ENCODE measurements at regions of chr2 and their contacts with region 1.

Region 1: GRCh38 chr2:42095923-42096408 is 48.1 kb downstream of the PKDCC start:
- DNase-seq: no peak
- H3K4me3 ChIP-seq: no peak overlapping the region
- CTCF ChIP-seq: peak; percentile 63

Region 2: DNA sequence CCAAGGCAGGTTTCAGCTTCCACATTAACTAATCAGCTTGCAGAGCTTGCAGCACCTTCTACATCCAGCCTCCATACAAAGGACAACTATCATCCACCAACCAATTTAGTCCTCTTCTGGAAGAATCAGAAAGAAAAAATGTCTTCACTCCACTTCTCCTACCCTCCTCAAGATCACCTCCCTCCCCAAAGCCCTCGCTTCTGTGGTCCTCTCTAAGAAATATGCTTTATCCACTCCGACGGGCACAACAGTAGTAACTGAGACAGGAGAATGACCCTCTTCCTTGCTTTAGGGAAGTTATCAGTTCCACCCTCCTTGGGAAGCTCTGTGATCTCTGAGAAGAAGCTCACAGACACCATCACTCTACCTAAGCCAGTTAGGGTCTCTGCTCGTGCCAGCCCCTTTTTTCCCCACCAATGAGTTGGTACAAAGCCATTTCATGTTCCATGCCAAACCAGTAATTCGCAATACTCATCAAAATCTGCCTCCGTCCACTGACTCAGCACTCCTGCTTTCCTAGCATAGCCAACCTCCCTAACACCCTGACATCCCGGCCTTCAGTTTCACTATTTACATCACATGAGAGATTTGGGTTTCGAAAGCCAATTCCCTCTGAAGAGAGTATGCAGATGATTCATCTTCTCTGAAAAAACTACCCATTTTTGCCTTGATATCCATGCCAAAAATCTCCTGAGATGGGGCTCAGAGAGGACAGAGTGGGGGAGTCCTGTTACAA is 162.2 kb before region 1 on chr2:
- CTCF ChIA-PET with region 1: no interaction called
- POLR2A ChIA-PET with region 1: no interaction called
- DNase-seq: peak; percentile 74
- H3K4me3 ChIP-seq: no peak overlapping the region
- CTCF ChIP-seq: no peak

Region 3: GRCh38 chr2:42127425-42128424 is 31.8 kb after region 1 on chr2:
- CTCF ChIA-PET with region 1: interaction called, 11 read pairs
- POLR2A ChIA-PET with region 1: no interaction called
- DNase-seq: no peak
- H3K4me3 ChIP-seq: no peak overlapping the region
- CTCF ChIP-seq: no peak

Region 4: DNA sequence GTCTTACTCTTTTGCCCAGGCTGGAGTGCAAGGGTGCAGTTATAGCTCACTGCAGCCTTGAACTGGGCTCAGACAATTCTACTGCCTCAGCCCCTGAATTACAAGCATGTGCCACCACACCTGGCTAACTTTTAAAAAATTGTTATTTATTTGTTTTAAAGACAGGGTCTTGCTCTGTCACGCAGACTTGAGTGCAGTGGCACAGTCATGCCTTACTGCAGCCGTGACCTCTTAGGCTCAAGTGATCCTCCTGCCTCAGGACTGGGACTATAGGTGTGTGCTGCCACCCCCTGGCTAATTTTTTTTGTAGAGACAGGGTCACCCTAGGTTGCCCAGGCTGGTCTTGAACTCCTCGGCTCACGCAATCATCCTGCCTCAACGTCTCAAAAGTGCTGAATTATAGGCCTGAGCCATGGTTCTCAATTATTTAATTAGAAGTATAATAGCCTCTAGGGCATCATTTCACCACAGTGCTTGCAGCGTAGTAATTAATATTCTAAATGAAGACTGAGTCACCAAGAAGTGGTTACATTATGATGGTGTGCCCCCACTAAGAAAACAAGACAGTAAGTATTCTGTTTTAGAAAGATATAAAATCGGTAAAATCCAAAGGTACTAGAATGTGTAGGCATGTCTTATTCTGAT is 142.8 kb after region 1 on chr2:
- CTCF ChIA-PET with region 1: interaction called, 34 read pairs
- POLR2A ChIA-PET with region 1: no interaction called
- DNase-seq: no peak
- H3K4me3 ChIP-seq: no peak overlapping the region
- CTCF ChIP-seq: no peak

Region 5: DNA sequence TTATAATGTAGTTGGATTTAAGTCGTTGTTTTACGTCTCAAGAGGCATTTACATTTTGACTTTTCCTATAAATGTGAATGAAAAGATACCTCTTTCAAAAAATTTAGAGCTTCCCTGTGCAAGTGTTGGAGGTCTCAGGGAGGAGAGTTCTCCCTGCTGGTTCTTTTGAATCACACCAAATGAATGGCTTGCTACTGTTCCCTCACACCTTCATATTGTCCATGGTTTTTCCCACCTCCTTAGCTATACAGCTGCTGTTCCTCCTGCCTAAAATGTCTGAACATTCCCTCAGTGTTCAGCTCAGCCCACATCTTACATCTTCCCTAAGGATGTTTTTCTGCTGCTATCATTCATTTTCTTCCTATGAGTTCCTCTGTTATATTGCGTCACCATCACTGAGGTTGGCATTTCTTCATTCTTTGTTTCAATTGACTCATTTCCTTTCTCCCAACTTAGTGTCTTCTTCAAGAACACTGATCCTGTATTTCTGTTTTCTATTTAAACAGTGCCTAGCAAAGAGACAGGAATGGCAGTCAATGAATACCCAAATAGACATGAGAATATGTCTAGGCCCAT is 219.0 kb after region 1 on chr2:
- CTCF ChIA-PET with region 1: interaction called, 10 read pairs
- POLR2A ChIA-PET with region 1: no interaction called
- DNase-seq: peak; percentile 87
- H3K4me3 ChIP-seq: no peak overlapping the region
- CTCF ChIP-seq: no peak

Region 6: DNA sequence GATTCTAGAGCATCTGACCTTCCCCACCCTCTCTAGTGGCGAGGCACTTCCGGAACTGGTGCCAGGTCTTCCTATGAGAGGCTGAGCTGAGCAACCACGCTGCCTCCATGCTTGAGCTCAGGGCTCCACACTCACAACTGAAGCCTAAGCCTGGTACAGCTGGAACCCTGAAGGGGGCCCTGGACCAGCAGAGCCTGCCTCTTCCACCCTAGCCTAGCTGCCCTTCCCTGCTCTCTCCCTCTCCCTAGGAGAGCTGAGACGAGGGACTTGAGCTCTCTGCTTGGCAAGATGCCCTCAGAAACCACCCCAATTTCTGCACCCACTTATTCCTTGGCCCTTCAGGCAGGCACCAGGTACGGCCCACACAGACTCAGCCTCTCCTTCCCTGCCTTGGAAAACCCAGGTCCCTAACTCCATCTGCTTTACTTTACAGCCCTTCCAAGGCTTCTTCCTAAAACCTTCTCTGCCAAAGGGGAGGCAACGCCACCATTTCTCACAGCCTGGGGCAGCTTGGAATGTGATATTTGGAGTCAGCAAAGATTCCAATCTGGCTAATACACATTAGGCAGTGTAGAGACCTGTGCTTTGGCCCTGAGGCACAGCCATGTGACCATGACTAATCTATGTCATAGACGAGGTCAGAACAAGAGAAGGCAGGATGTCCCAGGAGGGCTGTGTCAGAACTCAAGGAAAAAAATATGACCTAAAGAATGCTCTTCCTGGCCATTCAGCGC is 246.3 kb after region 1 on chr2:
- CTCF ChIA-PET with region 1: interaction called, 13 read pairs
- POLR2A ChIA-PET with region 1: no interaction called
- DNase-seq: peak; percentile 70
- H3K4me3 ChIP-seq: no peak overlapping the region
- CTCF ChIP-seq: no peak

Measured in AG04449 (cell line).